ENCODE measurements at regions of chr7 and their contacts with region 1.

Region 1: GRCh38 chr7:137169282-137169698 is 174.2 kb downstream of the PTN start:
- DNase-seq: peak; percentile 35 to 81 (median 65)
- ATAC-seq: peak; percentile 77 to 82
- H3K4me3 ChIP-seq: no peak overlapping the region
- H3K27ac ChIP-seq: no peak overlapping the region
- H3K4me1 ChIP-seq: no peaks in the 10 kb centered on the region
- H3K27me3 ChIP-seq: no peaks in the 10 kb centered on the region

Region 2: DNA sequence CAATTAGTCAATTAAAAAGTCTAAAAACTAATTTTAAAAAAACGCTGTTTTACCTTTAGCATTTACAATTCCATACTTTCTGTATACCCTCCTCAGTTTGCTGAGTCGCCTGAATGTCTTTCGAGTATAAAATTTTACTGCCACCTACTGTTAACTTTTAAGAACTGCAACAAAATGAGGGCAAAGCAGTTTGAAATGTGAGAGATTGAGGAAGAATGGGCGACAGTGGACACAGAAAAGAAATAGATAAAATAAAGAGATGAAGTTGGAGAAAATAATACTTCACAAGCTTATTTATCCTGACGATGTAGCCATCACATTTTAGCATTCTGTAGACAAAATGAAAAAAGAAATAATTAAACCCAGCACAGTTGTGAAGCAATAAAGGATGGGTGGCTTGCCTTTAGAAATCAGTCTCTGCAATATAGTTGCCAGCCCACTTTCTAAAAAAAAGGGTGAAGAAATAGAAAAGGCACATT is 285.0 kb after region 1 on chr7:
- intact Hi-C with region 1: loop called in 2 of 4 experiments (anchors 5 to 10 kb)
- DNase-seq: no peak
- ATAC-seq: peak; percentile 63 to 76
- H3K4me3 ChIP-seq: peak overlapping the region; percentile 48
- H3K27ac ChIP-seq: peak overlapping the region; percentile 45
- H3K4me1 ChIP-seq: no peaks in the 10 kb centered on the region
- H3K27me3 ChIP-seq: no peaks in the 10 kb centered on the region

Region 3: GRCh38 chr7:137469191-137469811 is 300.0 kb after region 1 on chr7:
- intact Hi-C with region 1: loop called in 1 of 4 experiments (anchors 5 kb)
- DNase-seq: no peak
- ATAC-seq: peak; percentile 81 to 94
- H3K4me3 ChIP-seq: no peak overlapping the region
- H3K27ac ChIP-seq: no peak overlapping the region
- H3K4me1 ChIP-seq: peaks cover 3% of the 10 kb centered on the region
- H3K27me3 ChIP-seq: no peaks in the 10 kb centered on the region

Region 4: DNA sequence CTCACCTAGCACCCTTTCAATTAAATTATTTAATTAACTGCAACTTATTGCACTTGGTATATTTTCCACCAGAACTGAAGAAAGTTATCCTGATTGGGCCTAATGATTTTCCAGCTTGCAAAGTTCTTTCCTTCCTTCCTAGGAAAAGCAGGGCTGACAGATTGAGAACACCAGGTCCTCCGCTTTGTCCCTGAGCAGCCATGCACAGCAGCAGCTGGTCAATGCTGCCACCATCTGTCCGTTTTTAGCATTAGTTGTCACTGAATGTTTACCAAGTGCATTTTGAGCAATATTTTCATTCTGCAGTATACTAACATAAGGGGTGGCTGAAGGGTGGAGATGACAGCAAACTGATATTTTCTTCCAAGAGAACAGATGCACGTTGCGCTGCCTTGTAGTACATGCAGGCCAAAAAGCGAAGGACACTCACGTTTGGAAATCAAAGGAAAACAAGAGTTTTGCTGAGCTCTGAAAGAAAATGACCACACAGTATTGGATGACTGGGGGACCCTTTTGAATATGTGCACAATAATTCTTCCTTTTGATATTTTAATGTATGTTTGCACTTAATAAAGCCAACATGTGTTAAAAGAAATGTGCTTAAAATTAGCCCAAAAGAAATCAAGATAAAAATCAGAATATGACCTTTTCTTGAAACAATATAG is 423.1 kb after region 1 on chr7:
- intact Hi-C with region 1: loop called (anchors 5 to 10 kb)
- DNase-seq: peak; percentile 56 to 71 (median 61)
- ATAC-seq: peak; percentile 92 to 94
- H3K4me3 ChIP-seq: no peak overlapping the region
- H3K27ac ChIP-seq: no peak overlapping the region
- H3K4me1 ChIP-seq: no peaks in the 10 kb centered on the region
- H3K27me3 ChIP-seq: no peaks in the 10 kb centered on the region